ENCODE measurements at regions of chr2 and their contacts with region 1.

Region 1: DNA sequence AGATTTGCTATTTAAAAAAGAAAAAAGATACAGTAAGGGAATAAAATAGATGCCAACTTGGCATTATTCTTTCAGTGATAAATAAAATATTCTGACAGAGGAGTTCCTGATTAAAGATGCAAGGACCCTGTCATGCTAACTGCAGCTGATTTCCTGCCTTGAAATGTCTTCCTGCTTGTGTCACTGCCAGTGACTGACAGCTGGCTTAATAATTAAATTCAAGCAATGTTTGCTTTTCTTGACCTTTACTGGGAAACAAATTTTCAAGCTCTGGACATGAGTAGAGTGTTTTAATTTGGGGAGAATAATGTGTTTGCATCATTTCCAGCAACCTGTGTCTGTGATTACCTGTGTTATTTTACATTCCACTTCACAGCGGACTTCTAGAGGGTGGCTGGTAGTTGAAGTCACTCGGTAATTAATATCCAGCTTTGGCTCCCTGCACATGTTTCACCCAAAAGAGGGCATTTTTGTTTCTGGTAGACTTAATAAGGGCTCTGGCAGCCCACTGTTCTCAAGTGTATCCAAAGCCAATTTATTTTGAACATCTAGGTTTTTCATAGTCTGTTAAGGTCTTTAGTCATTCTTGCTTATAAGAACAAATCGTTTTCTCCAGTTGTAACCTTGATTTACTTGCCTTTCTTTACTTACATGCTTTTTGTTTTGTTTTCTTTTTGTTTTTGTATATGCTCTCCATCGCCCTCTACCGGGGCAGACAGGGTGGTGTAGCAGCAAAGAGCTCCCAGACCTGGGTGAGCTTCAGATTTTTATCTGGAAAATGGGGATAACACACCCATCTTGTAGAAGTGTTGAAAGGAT is 48.5 kb upstream of the PROKR1 start:
- DNase-seq: peak; percentile 63
- H3K4me3 ChIP-seq: no peak overlapping the region
- H3K27ac ChIP-seq: no peak overlapping the region
- H3K4me1 ChIP-seq: no peaks in the 10 kb centered on the region
- H3K27me3 ChIP-seq: peaks cover 0 to 4% of the 10 kb centered on the region in 2 experiments
- CTCF ChIP-seq: peak; percentile 75 to 77
- POLR2A ChIP-seq: no peak

Region 2: GRCh38 chr2:67899187-67899586 is 695.7 kb before region 1 on chr2:
- CTCF ChIA-PET with region 1: no interaction called
- POLR2A ChIA-PET with region 1: no interaction called
- dilution Hi-C with region 1: no loop called
- intact Hi-C with region 1: no loop called
- DNase-seq: no peak
- H3K4me3 ChIP-seq: no peak overlapping the region
- H3K27ac ChIP-seq: no peak overlapping the region
- H3K4me1 ChIP-seq: no peaks in the 10 kb centered on the region
- H3K27me3 ChIP-seq: no peaks in the 10 kb centered on the region
- CTCF ChIP-seq: no peak
- POLR2A ChIP-seq: no peak

Region 3: DNA sequence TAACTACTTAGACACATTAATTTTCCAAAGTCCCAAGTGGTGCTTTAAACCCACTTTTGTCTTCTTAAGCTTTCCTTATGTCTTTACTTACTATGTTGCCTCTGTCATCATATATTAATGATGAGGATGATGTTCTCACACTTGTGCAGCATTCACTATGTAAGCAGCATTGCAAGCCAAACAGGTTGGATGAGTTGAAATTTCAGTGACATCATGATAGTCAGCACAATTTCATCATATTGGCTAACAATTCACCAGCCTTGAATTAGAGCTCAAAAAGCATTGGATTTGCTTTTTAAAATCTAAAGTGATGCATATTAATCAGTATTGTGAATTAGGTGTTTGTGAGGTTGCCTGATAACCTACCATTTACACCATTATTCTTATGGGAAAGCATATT is 119.8 kb before region 1 on chr2:
- CTCF ChIA-PET with region 1: interaction called, 14 read pairs
- POLR2A ChIA-PET with region 1: no interaction called
- dilution Hi-C with region 1: no loop called
- intact Hi-C with region 1: no loop called
- DNase-seq: no peak
- H3K4me3 ChIP-seq: no peak overlapping the region
- H3K27ac ChIP-seq: no peak overlapping the region
- H3K4me1 ChIP-seq: peaks cover 5% of the 10 kb centered on the region
- H3K27me3 ChIP-seq: no peaks in the 10 kb centered on the region
- CTCF ChIP-seq: no peak
- POLR2A ChIP-seq: no peak

Region 4: GRCh38 chr2:68548396-68548795 is 46.5 kb before region 1 on chr2:
- CTCF ChIA-PET with region 1: interaction called, 12 read pairs
- POLR2A ChIA-PET with region 1: no interaction called
- dilution Hi-C with region 1: no loop called
- intact Hi-C with region 1: no loop called
- DNase-seq: no peak
- H3K4me3 ChIP-seq: no peak overlapping the region
- H3K27ac ChIP-seq: no peak overlapping the region
- H3K4me1 ChIP-seq: no peaks in the 10 kb centered on the region
- H3K27me3 ChIP-seq: no peaks in the 10 kb centered on the region
- CTCF ChIP-seq: no peak
- POLR2A ChIP-seq: no peak

Region 5: GRCh38 chr2:68577183-68577582 is 17.7 kb before region 1 on chr2:
- CTCF ChIA-PET with region 1: interaction called, 29 read pairs
- POLR2A ChIA-PET with region 1: no interaction called
- dilution Hi-C with region 1: no loop called
- intact Hi-C with region 1: no loop called
- DNase-seq: no peak
- H3K4me3 ChIP-seq: no peak overlapping the region
- H3K27ac ChIP-seq: no peak overlapping the region
- H3K4me1 ChIP-seq: peaks cover 3% of the 10 kb centered on the region
- H3K27me3 ChIP-seq: no peaks in the 10 kb centered on the region
- CTCF ChIP-seq: no peak
- POLR2A ChIP-seq: no peak

Region 6: DNA sequence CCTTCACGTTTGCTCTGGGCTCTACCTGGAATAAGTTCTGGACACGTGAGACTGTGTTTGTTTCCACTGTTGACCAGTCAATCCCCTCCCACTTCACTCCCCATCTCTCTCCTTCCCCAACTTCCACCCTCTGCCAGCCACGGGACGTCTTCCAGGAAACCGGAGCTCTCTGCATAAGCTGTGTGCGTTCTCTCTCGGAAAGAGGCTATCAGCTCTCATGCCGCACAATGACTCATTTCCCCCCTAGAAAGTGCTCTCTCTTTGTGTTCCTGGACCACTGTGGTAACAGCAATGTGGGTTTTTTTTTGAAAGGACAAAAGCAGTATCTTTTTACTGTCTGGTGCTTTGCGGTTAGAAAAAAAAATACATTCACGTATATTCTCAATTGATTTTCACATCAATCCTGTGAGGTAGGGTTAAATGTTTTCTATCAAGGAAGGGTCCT is 58.7 kb after region 1 on chr2:
- CTCF ChIA-PET with region 1: interaction called, 22 read pairs
- POLR2A ChIA-PET with region 1: no interaction called
- dilution Hi-C with region 1: no loop called
- intact Hi-C with region 1: no loop called
- DNase-seq: peak; percentile 86
- H3K4me3 ChIP-seq: peak overlapping the region in 1 of 3 experiments; percentile 2
- H3K27ac ChIP-seq: no peak overlapping the region
- H3K4me1 ChIP-seq: peaks cover 17% of the 10 kb centered on the region
- H3K27me3 ChIP-seq: peaks cover 31 to 35% of the 10 kb centered on the region in 2 experiments
- CTCF ChIP-seq: no peak
- POLR2A ChIP-seq: no peak

Measured in endothelial cell of umbilical vein (primary cell).